Vagina (tissue), 2 donors: ENCODE measurements at regions of chr22 and their contacts with region 1.

Region 1: GRCh38 chr22:29040385-29041275 is 21.0 kb downstream of the C22orf31 start:
- DNase-seq: no peak
- H3K4me3 ChIP-seq: no peak overlapping the region
- H3K27ac ChIP-seq: peak overlapping the region; percentile 50
- H3K4me1 ChIP-seq: peaks cover 19% of the 10 kb centered on the region
- H3K27me3 ChIP-seq: no peaks in the 10 kb centered on the region
- CTCF ChIP-seq: peak; percentile 82 to 96 (median 94)
- POLR2A ChIP-seq: no peak

Region 2: DNA sequence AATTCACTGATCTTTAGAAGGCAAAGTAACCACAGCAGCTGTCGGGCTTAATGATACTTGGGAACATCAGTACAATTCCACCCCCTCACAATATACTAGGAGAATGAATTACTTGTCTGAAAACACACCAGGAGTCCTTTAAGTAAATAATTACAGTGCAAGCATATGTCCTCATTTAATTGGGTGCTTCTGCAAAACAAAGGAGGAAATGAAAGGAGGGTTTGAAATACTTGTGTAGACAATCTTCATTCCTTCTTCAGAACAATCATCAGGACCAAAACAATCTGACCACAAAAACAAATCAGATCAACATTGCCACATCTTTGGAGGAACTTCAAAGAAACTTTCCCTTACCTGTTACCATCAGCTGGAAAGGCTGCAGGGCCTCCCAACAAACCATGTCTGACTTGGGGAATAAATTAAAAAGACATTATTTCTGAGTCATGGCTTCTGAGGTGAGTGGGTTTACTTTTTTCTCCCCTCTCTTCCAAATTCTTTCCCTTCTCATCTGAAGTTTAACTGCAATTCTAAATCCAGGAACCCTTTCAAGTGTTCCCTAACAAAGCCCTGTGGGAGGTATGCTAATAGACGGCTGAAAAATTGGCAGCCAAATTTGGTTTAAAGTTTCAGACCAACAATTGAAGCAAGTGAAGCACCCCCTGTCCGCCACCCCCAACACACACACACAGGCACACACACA is 280.6 kb before region 1 on chr22:
- intact Hi-C with region 1: no loop called
- DNase-seq: no peak
- H3K4me3 ChIP-seq: no peak overlapping the region
- H3K27ac ChIP-seq: no peak overlapping the region
- H3K4me1 ChIP-seq: no peaks in the 10 kb centered on the region
- H3K27me3 ChIP-seq: no peaks in the 10 kb centered on the region
- CTCF ChIP-seq: no peak
- POLR2A ChIP-seq: no peak

Region 3: GRCh38 chr22:28846994-28847393 is 193.6 kb before region 1 on chr22:
- intact Hi-C with region 1: loop called (anchors 5 kb)
- DNase-seq: no peak
- H3K4me3 ChIP-seq: no peak overlapping the region
- H3K27ac ChIP-seq: no peak overlapping the region
- H3K4me1 ChIP-seq: no peaks in the 10 kb centered on the region
- H3K27me3 ChIP-seq: no peaks in the 10 kb centered on the region
- CTCF ChIP-seq: no peak
- POLR2A ChIP-seq: no peak

Region 4: DNA sequence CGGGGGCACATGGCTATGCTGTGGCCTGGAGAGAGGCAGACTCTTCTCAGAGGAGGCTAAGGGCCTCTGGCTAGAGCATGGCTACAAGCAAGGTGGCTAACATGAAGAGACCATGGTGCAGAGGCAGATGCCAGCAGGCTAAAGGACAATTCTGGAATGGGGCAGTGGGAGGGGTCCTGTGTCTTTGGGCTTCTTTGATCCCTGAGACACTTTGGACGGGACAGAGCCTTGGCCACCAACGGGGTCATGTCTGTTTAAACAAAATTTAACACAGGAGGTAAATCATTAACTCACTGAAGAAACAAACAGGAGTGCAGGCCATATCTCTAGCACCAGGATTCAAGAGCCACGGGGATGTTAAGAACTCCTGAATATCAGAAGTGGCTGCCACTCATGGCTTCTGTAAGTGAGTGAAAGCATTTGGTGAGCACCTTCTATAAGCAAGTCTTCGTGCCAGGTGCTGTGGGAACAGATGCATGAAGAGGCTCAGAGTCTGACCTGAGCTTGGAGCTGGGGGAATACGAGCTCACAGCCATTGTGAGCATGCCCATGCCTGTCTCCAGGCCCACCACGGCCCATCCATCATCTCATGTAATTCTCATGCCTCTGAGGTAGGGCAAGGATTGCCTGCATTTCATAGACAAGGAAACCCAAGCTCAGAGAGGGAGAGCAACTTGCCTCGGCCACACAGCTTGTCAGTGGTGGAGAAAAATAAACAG is 175.6 kb before region 1 on chr22:
- intact Hi-C with region 1: loop called (anchors 5 kb)
- DNase-seq: no peak
- H3K4me3 ChIP-seq: no peak overlapping the region
- H3K27ac ChIP-seq: no peak overlapping the region
- H3K4me1 ChIP-seq: no peaks in the 10 kb centered on the region
- H3K27me3 ChIP-seq: no peaks in the 10 kb centered on the region
- CTCF ChIP-seq: no peak
- POLR2A ChIP-seq: no peak

Region 5: DNA sequence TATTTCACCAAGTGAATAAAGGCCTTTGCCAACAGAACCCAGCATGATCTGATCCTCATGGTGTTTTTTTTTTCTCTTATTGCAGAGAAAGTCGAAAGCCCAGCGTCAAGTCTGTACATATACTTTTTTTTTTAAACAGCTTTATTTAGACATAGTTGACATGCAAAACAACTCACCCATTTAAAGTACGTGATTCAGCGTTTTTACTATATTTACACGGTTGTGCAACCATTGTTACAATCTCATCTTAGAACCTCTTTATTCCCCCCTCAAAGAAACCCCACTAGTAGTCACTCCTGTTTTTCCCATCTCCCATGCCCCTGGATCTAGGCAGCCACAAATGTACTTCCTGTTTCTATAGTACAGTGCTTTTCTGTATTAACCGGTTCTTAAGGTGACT is 368.3 kb after region 1 on chr22:
- intact Hi-C with region 1: no loop called
- DNase-seq: no peak
- H3K4me3 ChIP-seq: no peak overlapping the region
- H3K27ac ChIP-seq: no peak overlapping the region
- H3K4me1 ChIP-seq: no peaks in the 10 kb centered on the region
- H3K27me3 ChIP-seq: no peaks in the 10 kb centered on the region
- CTCF ChIP-seq: no peak
- POLR2A ChIP-seq: no peak